Aorta (tissue), 5 donors: ENCODE measurements at regions of chr10 and their contacts with region 1.

Region 1: GRCh38 chr10:51047857-51048256 is 26.4 kb upstream of the PRKG1 start:
- DNase-seq: no peak
- ATAC-seq: peak; percentile 78
- H3K4me3 ChIP-seq: no peak overlapping the region
- H3K27ac ChIP-seq: no peak overlapping the region
- H3K4me1 ChIP-seq: peaks cover 2 to 8% of the 10 kb centered on the region in 2 donors
- H3K27me3 ChIP-seq: no peaks in the 10 kb centered on the region

Region 2: GRCh38 chr10:50919010-50919409 is 128.8 kb before region 1 on chr10:
- intact Hi-C with region 1: no loop called
- DNase-seq: no peak
- ATAC-seq: no peak
- H3K4me3 ChIP-seq: no peak overlapping the region
- H3K27ac ChIP-seq: no peak overlapping the region
- H3K4me1 ChIP-seq: peaks cover 0 to 1% of the 10 kb centered on the region in 2 donors
- H3K27me3 ChIP-seq: no peaks in the 10 kb centered on the region

Region 3: GRCh38 chr10:51010977-51011376 is 36.9 kb before region 1 on chr10:
- intact Hi-C with region 1: loop called (anchors 5 kb)
- DNase-seq: no peak
- ATAC-seq: no peak
- H3K4me3 ChIP-seq: no peak overlapping the region
- H3K27ac ChIP-seq: no peak overlapping the region
- H3K4me1 ChIP-seq: peaks cover 11 to 19% of the 10 kb centered on the region in 2 donors
- H3K27me3 ChIP-seq: no peaks in the 10 kb centered on the region